Gastrocnemius medialis (tissue), 4 donors: ENCODE measurements at regions of chr11 and their contacts with region 1.

Region 1: GRCh38 chr11:62591448-62592145 is at the start of gene TUT1:
- DNase-seq: peak; percentile 98
- ATAC-seq: peak; percentile 94 to 96
- H3K4me3 ChIP-seq: peak within 1 kb of the TSS; percentile 69 to 91 (median 84)
- H3K27ac ChIP-seq: peak within 1 kb of the TSS; percentile 94 to 99 (median 96)
- H3K4me1 ChIP-seq: peaks cover 26% of the 10 kb centered on the region in 2 donors
- H3K27me3 ChIP-seq: no peaks in the 10 kb centered on the region
- CTCF ChIP-seq: no peak
- POLR2A ChIP-seq: peak; percentile 94 to 98
- total RNA-seq, gene TUT1: 7.8 to 15.7 (median 11.7) TPM

Region 2: DNA sequence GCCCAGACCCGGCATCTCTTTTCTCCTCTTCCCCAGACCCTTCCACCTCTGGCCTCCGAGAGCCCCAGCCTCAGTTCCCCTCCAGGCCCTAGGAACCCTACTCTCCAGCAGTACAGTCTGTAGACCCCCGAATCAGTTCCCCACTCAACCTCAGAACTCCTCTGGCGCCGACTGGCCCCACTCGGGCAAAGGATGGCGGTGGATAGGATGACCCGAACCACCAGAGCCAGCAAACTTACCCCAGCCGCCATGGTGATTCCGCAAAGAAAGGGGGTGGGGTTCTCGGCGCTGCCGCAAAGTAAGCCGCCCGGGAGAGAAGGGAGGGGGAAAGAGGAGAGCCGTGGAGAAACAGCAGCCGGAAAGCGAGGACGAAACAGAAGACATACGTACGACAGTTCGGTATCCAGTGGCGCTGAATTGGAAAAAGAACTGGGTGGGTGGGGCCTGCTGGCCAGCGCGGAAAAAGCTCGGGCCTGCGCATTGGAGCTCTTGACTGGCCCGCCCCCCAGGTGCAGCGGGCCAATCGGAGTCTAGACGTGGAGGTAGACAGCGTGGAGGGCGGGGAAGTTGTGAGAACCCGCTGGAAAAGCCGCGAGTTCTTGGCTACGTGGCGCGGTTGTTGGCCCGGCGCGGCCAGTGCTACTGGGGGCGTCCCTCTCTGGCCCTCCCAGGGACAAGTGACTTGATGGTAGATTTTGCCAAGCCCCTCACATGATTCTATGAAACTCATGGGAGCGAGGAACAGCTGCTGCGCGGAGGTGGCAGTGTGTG is 17.8 kb before region 1 on chr11 and contains the start of gene EEF1G:
- in situ Hi-C with region 1: no loop called
- intact Hi-C with region 1: loop called (anchors 1 kb)
- DNase-seq: peak; percentile 99 to 100
- ATAC-seq: peak; percentile 87 to 88
- H3K4me3 ChIP-seq: peak within 1 kb of the TSS; percentile 84 to 97 (median 90)
- H3K27ac ChIP-seq: peak within 1 kb of the TSS; percentile 88 to 94 (median 93)
- H3K4me1 ChIP-seq: peaks cover 50 to 59% of the 10 kb centered on the region in 2 donors
- H3K27me3 ChIP-seq: no peaks in the 10 kb centered on the region
- CTCF ChIP-seq: peak in 1 of 5 experiments; percentile 8
- POLR2A ChIP-seq: peak; percentile 72 to 88
- total RNA-seq, gene EEF1G: 1,797 to 2,946 (median 1,897) TPM

Region 3: DNA sequence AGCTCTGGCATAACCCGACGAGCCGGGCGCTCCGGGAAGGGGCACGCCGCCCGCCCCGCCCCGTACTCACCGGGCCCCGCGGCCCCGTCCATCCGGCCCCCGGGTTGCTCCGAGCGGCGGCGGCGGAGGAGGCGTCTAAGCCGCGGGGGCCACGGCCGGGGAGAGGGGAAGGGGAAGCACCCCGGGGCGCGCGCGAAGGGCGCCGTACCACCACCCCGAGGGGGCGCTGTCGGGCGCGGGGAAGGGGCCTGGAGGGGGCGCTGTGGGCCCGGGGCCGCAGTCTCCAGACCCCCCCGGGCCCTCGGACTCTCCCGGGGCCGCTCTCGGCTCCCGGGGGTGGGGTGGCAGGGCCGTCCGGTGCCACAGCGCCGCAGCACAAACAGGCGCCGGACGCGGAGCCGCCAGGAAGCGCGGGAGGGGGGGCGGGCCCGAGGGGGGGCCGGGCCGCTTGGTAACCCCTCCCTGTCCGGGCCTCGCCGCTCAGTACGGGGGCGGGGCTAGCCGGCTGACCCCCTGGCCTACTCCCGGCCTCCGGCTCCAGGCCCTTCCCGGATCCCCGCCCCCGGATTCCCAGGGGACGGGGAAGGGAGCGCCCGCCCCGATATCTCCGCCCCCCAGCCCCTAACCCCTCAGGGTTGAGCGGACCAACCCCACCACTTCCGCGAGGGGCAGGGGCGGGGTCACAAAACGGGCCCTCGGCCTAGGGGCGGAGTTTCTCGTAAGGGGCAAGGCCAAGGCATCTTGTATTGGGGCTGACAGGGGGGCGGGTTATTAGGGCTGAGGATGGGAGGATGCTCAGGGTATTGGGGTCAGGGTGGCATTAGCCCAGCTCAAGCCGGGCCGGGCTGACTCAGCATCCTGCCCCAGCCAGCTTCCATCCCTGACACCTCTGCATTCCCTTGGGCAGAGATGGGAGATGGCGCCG is 21.0 kb after region 1 on chr11 and contains the starts of genes EML3 and ROM1:
- in situ Hi-C with region 1: no loop called
- intact Hi-C with region 1: loop called (anchors 1 kb)
- DNase-seq: peak; percentile 80 to 82
- ATAC-seq: peak; percentile 82 to 83
- H3K4me3 ChIP-seq: peak within 1 kb of the TSS; percentile 71 to 93 (median 86)
- H3K27ac ChIP-seq: peak within 1 kb of the TSS; percentile 90 to 95 (median 92)
- H3K4me1 ChIP-seq: peaks cover 16 to 21% of the 10 kb centered on the region in 2 donors
- H3K27me3 ChIP-seq: no peaks in the 10 kb centered on the region
- CTCF ChIP-seq: peak in 4 of 5 experiments; percentile 91 to 99 (median 94)
- POLR2A ChIP-seq: no peak
- total RNA-seq, gene EML3: 4.7 to 7.9 (median 7.0) TPM
- total RNA-seq, gene ROM1: 1.6 to 3.7 (median 2.7) TPM

Region 4: GRCh38 chr11:62771144-62772021 is 179.8 kb after region 1 on chr11 and contains the start of gene TAF6L:
- in situ Hi-C with region 1: no loop called
- intact Hi-C with region 1: loop called (anchors 5 kb)
- DNase-seq: peak; percentile 99
- ATAC-seq: peak; percentile 92 to 97
- H3K4me3 ChIP-seq: peak within 1 kb of the TSS; percentile 74 to 87 (median 76)
- H3K27ac ChIP-seq: peak within 1 kb of the TSS; percentile 89 to 99 (median 96)
- H3K4me1 ChIP-seq: peaks cover 18 to 23% of the 10 kb centered on the region in 2 donors
- H3K27me3 ChIP-seq: no peaks in the 10 kb centered on the region
- CTCF ChIP-seq: peak in 1 of 5 experiments; percentile 38
- POLR2A ChIP-seq: peak in 1 of 2 donors; percentile 45
- total RNA-seq, gene TAF6L: 13.5 to 43.2 (median 21.4) TPM

Region 5: DNA sequence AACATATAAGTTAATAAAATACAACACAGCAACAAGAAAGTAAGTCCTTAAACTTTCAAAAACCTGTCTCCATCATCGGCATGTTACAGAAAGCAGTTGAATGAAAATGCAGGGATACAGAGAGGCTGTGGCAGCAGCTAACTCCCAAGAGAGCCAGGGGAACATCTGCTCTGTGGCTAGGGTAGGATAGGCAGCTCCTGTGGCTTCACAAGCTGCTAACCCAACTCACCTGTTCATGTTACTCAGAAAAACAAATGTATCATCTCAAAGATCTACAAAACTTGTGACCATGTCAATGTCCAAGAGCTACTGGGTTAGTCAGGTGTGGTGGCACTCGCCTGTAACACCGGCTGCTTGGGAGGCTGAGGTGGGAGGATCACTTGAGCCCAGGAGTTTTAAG is 1037.8 kb after region 1 on chr11:
- in situ Hi-C with region 1: no loop called
- intact Hi-C with region 1: no loop called
- DNase-seq: no peak
- ATAC-seq: no peak
- H3K4me3 ChIP-seq: no peak overlapping the region
- H3K27ac ChIP-seq: no peak overlapping the region
- H3K4me1 ChIP-seq: no peaks in the 10 kb centered on the region
- H3K27me3 ChIP-seq: no peaks in the 10 kb centered on the region
- CTCF ChIP-seq: no peak
- POLR2A ChIP-seq: no peak